Left cardiac atrium (tissue), 4 donors: ENCODE measurements at regions of chr6 and their contacts with region 1.

Region 1: DNA sequence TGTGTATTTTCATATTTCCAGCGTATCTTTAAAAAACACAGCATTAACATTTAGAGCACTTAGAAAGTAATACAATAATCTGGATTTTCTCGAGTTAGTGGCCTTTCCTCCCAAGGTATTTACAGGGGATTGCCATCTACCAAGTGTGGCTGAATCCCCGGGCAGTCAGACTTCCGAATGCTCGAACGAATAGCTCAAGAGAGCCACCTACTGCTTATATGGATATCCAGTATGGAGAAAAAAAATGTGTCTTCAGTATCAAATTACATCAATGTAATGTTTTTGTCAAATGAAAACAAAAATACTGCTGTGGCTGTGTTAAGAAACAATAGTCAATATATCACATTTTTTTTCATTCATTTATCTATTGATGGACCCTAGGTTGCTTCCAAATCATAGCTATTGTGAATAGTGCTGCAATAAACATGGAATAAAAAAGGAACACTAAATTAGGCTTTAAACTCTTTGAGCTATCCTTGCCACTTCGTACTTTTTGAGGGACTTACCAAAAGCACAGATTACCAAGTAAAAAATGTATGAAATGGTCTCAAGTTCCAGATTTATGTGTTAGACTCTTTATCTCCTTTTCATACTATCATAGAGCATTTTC is 654.5 kb upstream of the PTCHD4 start:
- DNase-seq: no peak
- ATAC-seq: peak; percentile 53 to 71

Region 2: DNA sequence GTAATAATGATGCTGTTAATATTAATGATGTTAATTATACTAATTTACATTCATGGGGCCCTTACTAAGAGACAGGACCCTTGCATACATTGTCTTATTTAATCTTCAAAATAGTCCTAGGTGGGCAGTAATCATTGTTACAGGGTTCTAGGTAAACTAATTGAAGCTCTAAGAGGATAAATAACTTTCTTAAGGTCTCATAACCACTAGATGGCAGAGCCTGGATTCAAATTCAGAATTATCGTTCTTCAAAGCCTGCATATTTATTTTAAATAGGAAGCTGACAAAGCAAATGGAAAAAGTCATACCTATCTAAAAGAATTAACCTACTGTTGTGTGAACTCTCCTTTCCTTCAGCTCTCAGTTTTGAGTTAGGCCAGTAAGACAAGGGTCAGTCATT is 678.0 kb before region 1 on chr6:
- intact Hi-C with region 1: loop called in 1 of 2 experiments (anchors 10 kb)
- DNase-seq: no peak
- ATAC-seq: no peak

Region 3: GRCh38 chr6:49269190-49269589 is 503.7 kb after region 1 on chr6:
- intact Hi-C with region 1: no loop called
- DNase-seq: no peak
- ATAC-seq: no peak